Common myeloid progenitor, CD34-positive (primary cell): ENCODE measurements at regions of chr5 and their contacts with region 1.

Region 1: DNA sequence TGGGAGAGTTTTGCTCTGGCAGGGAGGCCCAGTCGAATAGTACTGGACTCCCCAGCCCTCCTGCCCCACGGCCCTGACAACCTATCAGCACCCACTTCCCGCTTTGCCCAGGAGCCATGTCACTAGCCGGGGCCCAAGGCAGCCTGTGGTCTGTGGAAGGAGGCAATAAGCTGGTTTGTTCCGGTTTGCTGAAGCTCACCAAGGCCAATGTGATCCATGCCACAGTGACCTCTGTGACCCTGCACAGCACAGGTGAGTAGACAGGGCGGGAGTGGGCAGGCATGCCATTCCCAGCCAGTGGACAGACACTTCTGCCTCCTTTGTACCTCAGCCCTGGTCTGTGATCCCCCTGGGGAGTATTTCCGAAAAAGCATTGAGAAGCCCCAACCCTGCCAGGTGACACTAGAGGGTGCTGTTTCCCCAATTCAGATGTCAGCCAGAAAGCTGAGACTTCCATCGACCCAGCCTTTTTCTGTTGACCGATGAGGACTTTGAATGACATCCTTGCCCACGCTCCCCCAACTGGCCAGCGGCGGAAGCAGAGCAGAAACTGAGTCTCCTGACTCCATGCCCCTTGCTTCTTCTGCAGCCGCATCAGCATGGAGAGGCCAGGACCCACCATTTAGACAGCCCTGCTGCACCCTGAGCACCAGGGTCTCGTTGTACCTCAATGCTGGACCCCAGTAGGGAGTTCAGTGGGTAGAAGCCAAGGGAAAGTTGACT is 9.6 kb downstream of the PCYOX1L start:
- DNase-seq: peak; percentile 51 to 71 (median 59)
- H3K4me3 ChIP-seq: no peak overlapping the region
- H3K27ac ChIP-seq: no peak overlapping the region
- H3K4me1 ChIP-seq: peaks cover 0 to 19% (median 0%) of the 10 kb centered on the region in 4 experiments
- H3K27me3 ChIP-seq: no peaks in the 10 kb centered on the region

Region 2: GRCh38 chr5:148939676-148940075 is 427.7 kb before region 1 on chr5:
- CTCF ChIA-PET with region 1: no interaction called
- POLR2A ChIA-PET with region 1: no interaction called
- DNase-seq: no peak
- H3K4me3 ChIP-seq: no peak overlapping the region
- H3K27ac ChIP-seq: no peak overlapping the region
- H3K4me1 ChIP-seq: no peaks in the 10 kb centered on the region
- H3K27me3 ChIP-seq: no peaks in the 10 kb centered on the region

Region 3: DNA sequence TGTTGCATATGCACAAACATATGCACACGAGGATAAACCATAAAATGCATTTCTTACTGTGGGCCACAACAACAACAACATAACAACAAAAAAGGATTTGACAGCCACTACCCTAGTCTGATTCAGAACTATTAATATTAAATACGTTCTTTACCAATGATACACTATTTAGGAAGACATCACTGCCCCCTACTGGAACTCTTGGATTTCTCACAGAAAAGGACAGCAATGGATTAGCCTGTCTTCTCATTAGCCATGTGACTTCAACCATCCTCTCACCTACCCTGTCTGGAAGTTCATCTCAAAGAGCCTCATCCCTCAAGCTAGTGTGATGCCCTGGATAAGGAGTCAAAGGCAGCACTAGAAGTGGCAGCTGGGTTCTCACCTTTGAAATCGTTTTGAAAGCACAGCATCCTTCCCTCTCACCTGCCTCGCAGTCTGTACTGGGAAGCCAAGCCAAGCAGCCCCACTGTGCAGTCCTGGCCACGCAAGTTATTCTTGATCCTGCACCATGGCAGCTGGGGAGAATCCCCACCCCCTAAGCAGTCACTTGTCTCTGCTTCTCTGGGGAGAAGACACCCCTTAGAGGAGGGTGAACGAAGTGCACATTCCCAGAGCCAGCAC is 369.1 kb before region 1 on chr5:
- CTCF ChIA-PET with region 1: no interaction called
- POLR2A ChIA-PET with region 1: no interaction called
- DNase-seq: peak; percentile 59 to 74 (median 70)
- H3K4me3 ChIP-seq: no peak overlapping the region
- H3K27ac ChIP-seq: no peak overlapping the region
- H3K4me1 ChIP-seq: no peaks in the 10 kb centered on the region
- H3K27me3 ChIP-seq: no peaks in the 10 kb centered on the region

Region 4: DNA sequence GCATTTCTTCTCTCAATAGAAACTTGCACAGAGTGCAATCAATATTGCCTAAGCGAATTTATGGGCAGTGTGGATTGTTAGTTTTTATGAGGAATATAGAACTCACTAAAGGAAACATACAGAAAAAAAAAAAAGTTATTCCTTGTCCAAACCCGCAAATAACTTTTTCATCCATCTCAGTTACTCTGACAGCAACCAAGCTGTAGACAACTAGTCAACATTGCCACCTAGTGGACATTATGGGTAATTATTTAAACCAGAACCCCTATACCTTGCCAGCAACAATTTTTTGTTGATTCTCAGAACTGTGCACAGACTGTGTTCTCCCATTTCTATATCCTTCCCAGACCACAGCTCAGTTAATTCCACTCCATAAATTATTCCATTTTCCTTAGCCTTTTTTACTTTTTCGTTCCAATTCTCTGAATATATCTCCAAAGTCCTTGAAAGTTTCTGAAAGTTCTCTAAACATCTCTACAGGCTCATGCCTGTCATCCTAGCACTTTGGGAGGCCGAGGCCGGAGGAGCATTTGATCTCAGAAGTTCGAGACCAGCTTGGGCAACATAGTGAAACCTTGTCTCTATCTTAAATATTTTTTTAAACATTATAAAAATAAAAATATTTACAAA is 98.4 kb before region 1 on chr5:
- CTCF ChIA-PET with region 1: interaction called, 12 read pairs
- POLR2A ChIA-PET with region 1: no interaction called
- DNase-seq: peak; percentile 63 to 80 (median 77)
- H3K4me3 ChIP-seq: no peak overlapping the region
- H3K27ac ChIP-seq: no peak overlapping the region
- H3K4me1 ChIP-seq: peaks cover 2 to 25% (median 13%) of the 10 kb centered on the region in 4 experiments
- H3K27me3 ChIP-seq: peaks cover 0 to 23% (median 9%) of the 10 kb centered on the region in 5 experiments

Region 5: GRCh38 chr5:149317281-149318048 is 49.9 kb before region 1 on chr5:
- CTCF ChIA-PET with region 1: interaction called, 57 read pairs
- POLR2A ChIA-PET with region 1: no interaction called
- DNase-seq: peak; percentile 43 to 61 (median 54)
- H3K4me3 ChIP-seq: no peak overlapping the region
- H3K27ac ChIP-seq: no peak overlapping the region
- H3K4me1 ChIP-seq: peaks cover 0 to 11% (median 6%) of the 10 kb centered on the region in 4 experiments
- H3K27me3 ChIP-seq: no peaks in the 10 kb centered on the region

Region 6: DNA sequence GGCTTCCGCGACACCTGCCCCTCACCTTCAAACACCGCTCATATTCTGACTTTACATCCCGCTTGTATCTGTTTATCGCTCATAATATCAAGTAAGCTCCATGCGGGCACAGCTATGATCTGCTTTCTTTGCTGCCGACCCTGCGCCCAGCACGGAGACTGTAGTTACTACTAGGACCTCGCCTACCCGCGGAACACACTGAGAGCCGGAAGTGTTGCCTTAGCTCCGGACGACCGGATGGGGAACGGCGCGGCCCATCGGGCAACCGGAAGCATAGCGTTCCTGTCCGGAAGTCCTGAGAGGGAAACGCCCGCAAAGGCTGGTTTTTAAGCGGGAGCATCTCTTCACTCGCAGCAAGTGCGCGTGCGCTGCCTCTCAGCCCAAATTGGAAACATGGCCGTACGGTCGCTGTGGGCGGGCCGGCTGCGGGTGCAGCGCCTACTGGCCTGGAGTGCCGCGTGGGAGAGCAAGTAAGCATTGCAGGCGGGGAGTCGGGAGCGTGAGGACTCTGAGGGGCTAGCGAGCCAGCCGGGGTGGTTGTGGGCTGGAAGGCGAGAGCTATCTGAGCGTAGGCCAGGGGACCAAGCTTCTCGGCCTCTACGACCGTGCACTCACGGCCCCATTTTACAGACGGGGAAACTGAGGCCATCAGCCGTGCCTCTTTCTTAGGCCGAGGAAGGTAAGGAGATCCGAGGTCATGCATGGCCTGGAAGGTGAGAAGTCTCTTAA is 22.1 kb before region 1 on chr5 and contains the start of gene GRPEL2:
- CTCF ChIA-PET with region 1: interaction called, 46 read pairs
- POLR2A ChIA-PET with region 1: no interaction called
- DNase-seq: peak; percentile 86 to 92 (median 91)
- H3K4me3 ChIP-seq: peak within 1 kb of the TSS; percentile 60 to 97 (median 83)
- H3K27ac ChIP-seq: peak within 1 kb of the TSS in 1 of 2 experiments; percentile 69
- H3K4me1 ChIP-seq: peaks cover 9 to 35% (median 25%) of the 10 kb centered on the region in 4 experiments
- H3K27me3 ChIP-seq: no peaks in the 10 kb centered on the region

Region 7: DNA sequence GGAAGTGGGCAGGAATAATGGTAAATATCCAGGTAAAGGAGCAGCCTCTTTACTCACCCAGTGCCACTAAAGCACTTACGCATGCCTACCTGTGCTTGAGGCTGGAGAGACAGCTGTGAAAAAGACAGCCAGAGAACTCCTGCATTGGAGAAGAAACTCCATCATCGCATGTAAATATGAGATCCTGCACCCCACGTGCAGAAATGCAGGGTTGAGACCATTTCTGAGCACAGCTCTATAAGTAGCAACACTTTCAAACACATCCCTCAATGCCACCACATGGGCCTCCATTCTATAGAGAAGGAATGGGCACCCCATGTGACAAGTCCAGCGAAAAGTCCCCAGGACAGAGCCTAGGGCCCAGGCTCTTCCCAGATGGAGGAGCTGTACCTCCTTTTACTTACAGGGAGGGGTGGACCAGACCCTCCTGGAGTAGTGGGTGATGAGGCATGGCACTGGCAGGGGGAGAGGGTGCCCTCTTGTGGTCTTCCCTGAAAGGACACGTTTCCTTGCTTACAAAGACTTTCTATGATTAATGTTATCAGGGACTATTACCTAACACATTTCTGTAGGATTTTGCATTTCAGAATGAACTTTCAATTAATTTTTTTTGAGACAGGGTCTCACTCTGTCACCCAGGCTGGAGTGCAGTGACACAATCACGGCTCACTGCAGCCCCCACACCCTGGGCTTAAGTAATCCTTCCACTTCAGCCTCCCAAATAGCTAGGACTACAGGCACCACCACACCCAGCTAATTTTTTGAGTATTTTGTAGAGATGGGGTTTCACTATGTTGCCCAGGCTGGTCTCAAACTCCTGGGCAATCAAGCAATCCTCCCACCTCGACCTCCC is 67.0 kb after region 1 on chr5:
- CTCF ChIA-PET with region 1: interaction called, 91 read pairs
- POLR2A ChIA-PET with region 1: no interaction called
- DNase-seq: peak; percentile 52 to 73 (median 65)
- H3K4me3 ChIP-seq: no peak overlapping the region
- H3K27ac ChIP-seq: no peak overlapping the region
- H3K4me1 ChIP-seq: peaks cover 0 to 38% (median 24%) of the 10 kb centered on the region in 4 experiments
- H3K27me3 ChIP-seq: no peaks in the 10 kb centered on the region

Region 8: GRCh38 chr5:149561848-149562247 is 194.4 kb after region 1 on chr5:
- CTCF ChIA-PET with region 1: interaction called, 13 read pairs
- POLR2A ChIA-PET with region 1: no interaction called
- DNase-seq: peak in 1 of 3 donors; percentile 18
- H3K4me3 ChIP-seq: no peak overlapping the region
- H3K27ac ChIP-seq: no peak overlapping the region
- H3K4me1 ChIP-seq: peaks cover 0 to 10% (median 0%) of the 10 kb centered on the region in 4 experiments
- H3K27me3 ChIP-seq: no peaks in the 10 kb centered on the region